Tibial artery (tissue), 4 donors: ENCODE measurements at regions of chr9 and their contacts with region 1.

Region 1: GRCh38 chr9:9079473-9079872 is 1279.9 kb upstream of the DMAC1 start:
- DNase-seq: no peak
- H3K4me3 ChIP-seq: no peak overlapping the region
- H3K27ac ChIP-seq: no peak overlapping the region
- H3K4me1 ChIP-seq: no peaks in the 10 kb centered on the region
- H3K27me3 ChIP-seq: no peaks in the 10 kb centered on the region
- CTCF ChIP-seq: no peak

Region 2: GRCh38 chr9:8684978-8685708 is 394.3 kb before region 1 on chr9:
- intact Hi-C with region 1: loop called (anchors 10 kb)
- DNase-seq: no peak
- H3K4me3 ChIP-seq: no peak overlapping the region
- H3K27ac ChIP-seq: no peak overlapping the region
- H3K4me1 ChIP-seq: peaks cover 0 to 9% (median 0%) of the 10 kb centered on the region in 4 donors
- H3K27me3 ChIP-seq: no peaks in the 10 kb centered on the region
- CTCF ChIP-seq: no peak

Region 3: GRCh38 chr9:8980496-8981013 is 98.9 kb before region 1 on chr9:
- intact Hi-C with region 1: no loop called
- DNase-seq: no peak
- H3K4me3 ChIP-seq: no peak overlapping the region
- H3K27ac ChIP-seq: no peak overlapping the region
- H3K4me1 ChIP-seq: no peaks in the 10 kb centered on the region
- H3K27me3 ChIP-seq: no peaks in the 10 kb centered on the region
- CTCF ChIP-seq: no peak

Region 4: GRCh38 chr9:9229269-9229668 is 149.8 kb after region 1 on chr9:
- intact Hi-C with region 1: no loop called
- DNase-seq: no peak
- H3K4me3 ChIP-seq: no peak overlapping the region
- H3K27ac ChIP-seq: no peak overlapping the region
- H3K4me1 ChIP-seq: no peaks in the 10 kb centered on the region
- H3K27me3 ChIP-seq: no peaks in the 10 kb centered on the region
- CTCF ChIP-seq: no peak